MCF 10A (cell line): ENCODE measurements at regions of chr2 and their contacts with region 1.

Region 1: DNA sequence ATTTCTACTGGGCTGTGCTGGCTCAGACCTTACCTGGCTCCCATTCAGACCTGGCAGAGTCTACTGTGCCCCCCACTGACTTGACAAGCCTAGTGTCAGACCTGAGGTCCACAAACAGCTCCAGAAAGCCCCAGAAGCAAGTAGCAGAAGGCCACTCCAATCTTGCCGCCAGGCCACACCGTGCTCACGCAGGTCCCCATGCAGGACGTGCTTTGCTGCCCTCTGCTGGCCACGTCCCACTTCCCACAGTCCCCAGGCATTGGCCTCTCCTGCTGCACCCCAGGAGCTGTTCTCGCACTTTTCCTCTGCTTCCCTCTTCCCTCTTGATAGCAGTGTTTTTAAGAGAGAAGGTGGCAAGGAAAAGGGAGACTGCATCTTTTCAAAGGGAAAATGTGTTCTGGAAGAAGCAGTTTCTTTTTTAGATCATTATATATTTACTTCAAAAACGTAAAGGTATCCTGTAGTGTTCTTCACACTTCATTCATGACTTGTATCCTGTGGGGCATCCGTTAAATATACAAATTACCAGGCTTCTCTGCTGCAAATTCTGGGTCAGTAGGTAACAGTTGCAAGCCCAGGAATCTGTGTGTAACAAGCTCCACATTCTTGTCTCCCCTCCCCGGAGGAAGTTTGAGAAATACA is 81.4 kb upstream of the PAPOLG start:
- DNase-seq: peak; percentile 77
- H3K4me3 Mint-ChIP-seq: no peak overlapping the region
- H3K27ac Mint-ChIP-seq: no peak overlapping the region
- H3K4me1 Mint-ChIP-seq: peaks cover 11% of the 10 kb centered on the region
- H3K27me3 Mint-ChIP-seq: peaks cover 21% of the 10 kb centered on the region
- CTCF ChIP-seq: peak; percentile 83

Region 2: GRCh38 chr2:60560734-60561644 is 113.7 kb before region 1 on chr2:
- CTCF ChIA-PET with region 1: interaction called, 53 read pairs
- POLR2A ChIA-PET with region 1: interaction called, 4 read pairs
- intact Hi-C with region 1: loop called (anchors 2 kb)
- DNase-seq: peak; percentile 58
- H3K4me3 Mint-ChIP-seq: no peak overlapping the region
- H3K27ac Mint-ChIP-seq: no peak overlapping the region
- H3K4me1 Mint-ChIP-seq: no peaks in the 10 kb centered on the region
- H3K27me3 Mint-ChIP-seq: peaks cover 37% of the 10 kb centered on the region
- CTCF ChIP-seq: peak; percentile 41

Region 3: DNA sequence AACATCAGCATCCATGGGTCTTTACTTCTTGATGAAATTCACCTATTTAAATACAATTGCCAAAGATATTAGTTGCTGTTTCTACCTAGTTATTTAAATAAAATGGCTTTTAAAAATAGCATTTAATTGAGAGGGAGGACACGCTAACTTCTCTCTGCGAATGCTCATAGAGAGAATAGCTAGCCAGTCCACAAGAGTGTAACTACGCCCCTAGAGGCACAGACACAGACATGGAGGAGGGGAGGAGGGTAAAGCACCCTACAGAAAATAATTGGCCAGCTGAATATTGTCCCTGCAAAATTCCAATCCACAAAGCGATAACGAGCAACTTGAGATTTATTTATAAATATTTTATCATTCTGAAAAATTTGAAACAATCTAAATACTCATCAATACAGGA is 15.6 kb before region 1 on chr2:
- CTCF ChIA-PET with region 1: interaction called, 16 read pairs
- POLR2A ChIA-PET with region 1: no interaction called
- intact Hi-C with region 1: no loop called
- DNase-seq: no peak
- H3K4me3 Mint-ChIP-seq: no peak overlapping the region
- H3K27ac Mint-ChIP-seq: no peak overlapping the region
- H3K4me1 Mint-ChIP-seq: no peaks in the 10 kb centered on the region
- H3K27me3 Mint-ChIP-seq: peaks cover 28% of the 10 kb centered on the region
- CTCF ChIP-seq: no peak

Region 4: DNA sequence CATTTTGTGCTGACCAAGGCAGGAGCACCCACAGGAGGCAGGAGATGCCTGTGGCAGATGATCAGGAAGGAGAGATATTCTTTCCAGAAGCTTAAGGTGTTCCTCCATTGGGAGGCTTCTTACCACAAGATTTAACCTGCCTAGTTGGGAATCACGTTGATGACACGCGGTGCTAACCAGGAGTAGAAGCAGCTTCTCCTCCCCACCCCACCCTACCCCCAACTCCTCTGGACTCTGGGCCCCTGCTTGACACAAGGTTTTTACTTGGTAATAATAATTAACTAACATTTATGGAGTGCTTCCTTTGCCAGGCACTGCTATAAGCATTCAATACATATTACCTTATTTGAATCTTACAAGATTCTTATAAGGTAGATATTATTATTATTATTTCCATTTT is 18.9 kb after region 1 on chr2:
- CTCF ChIA-PET with region 1: interaction called, 15 read pairs
- POLR2A ChIA-PET with region 1: no interaction called
- intact Hi-C with region 1: no loop called
- DNase-seq: no peak
- H3K4me3 Mint-ChIP-seq: no peak overlapping the region
- H3K27ac Mint-ChIP-seq: no peak overlapping the region
- H3K4me1 Mint-ChIP-seq: no peaks in the 10 kb centered on the region
- H3K27me3 Mint-ChIP-seq: no peaks in the 10 kb centered on the region
- CTCF ChIP-seq: no peak